SK-N-SH (cell line): ENCODE measurements at regions of chr20 and their contacts with region 1.

Region 1: GRCh38 chr20:35718972-35719635 is 19.9 kb downstream of the ROMO1 start:
- DNase-seq: no peak
- H3K4me3 ChIP-seq: no peak overlapping the region
- H3K27ac ChIP-seq: no peak overlapping the region
- H3K4me1 ChIP-seq: no peaks in the 10 kb centered on the region
- H3K27me3 ChIP-seq: no peaks in the 10 kb centered on the region
- CTCF ChIP-seq: no peak
- EP300 ChIP-seq: no peak
- RAD21 ChIP-seq: no peak

Region 2: DNA sequence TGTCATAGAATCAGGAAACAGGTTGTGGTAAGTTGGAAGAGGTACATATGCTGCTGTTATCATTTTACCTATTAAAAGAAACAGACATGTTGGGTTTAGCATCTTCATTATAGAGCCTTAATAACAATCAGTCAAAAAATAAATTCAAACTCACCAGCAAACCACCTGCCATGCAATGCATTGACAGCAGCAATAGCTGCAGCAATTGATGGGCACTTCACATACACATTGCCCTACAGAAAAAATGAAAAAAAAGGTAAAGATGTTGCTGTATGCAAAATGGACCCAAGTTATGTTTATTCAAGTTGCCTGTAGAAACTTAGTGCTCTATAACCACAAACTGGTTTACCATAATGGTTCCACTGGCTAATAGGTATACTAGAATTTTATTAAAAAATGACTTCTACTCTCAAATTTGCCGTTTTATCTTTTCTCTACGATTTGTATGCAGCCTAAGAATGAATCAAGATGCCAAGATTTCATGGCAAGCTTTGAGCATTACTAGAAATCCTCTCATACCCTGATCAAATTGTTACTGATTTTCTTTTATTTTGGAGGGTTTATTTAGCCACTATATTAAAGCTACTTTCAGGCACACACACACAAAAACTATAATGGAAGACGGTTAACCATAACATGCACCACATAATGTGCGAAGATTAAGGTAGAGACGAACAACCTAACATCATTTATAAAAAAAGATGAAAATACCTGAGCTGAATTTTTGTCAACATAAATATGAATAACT is 14.4 kb before region 1 on chr20:
- CTCF ChIA-PET with region 1: interaction called, 12 read pairs
- POLR2A ChIA-PET with region 1: interaction called, 3 read pairs
- DNase-seq: no peak
- H3K4me3 ChIP-seq: no peak overlapping the region
- H3K27ac ChIP-seq: peak overlapping the region in 1 of 2 experiments; percentile 89; a peak in 1 of 4 replicates
- H3K4me1 ChIP-seq: peaks cover 5 to 9% of the 10 kb centered on the region in 2 experiments
- H3K27me3 ChIP-seq: no peaks in the 10 kb centered on the region
- CTCF ChIP-seq: no peak
- EP300 ChIP-seq: no peak
- RAD21 ChIP-seq: no peak